Esophagus squamous epithelium (tissue), 5 donors: ENCODE measurements at regions of chr13 and their contacts with region 1.

Region 1: DNA sequence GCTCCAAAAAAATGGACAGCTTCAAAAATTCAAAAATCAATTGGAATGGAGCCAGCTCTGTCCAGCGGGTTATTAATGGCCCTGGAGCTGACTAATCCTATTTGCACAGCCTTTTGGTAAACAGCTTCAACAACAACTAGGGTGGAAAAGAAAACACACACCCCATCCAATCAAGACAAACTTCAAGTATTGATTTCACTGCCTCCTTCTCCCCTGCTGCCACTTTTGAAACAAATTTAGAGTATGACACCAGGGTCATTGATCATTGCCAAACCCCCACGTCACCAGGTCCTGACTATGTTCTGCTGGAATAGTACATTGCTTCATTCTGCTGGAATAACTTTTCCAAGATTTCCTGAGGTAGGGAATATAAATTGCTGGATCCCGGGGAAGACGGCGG is 56.8 kb upstream of the GTF3A start:
- DNase-seq: no peak
- H3K4me3 ChIP-seq: no peak overlapping the region
- H3K27ac ChIP-seq: no peak overlapping the region
- H3K4me1 ChIP-seq: peaks cover 0 to 2% (median 1%) of the 10 kb centered on the region in 3 donors
- H3K27me3 ChIP-seq: peaks cover 0 to 77% (median 0%) of the 10 kb centered on the region in 4 donors
- CTCF ChIP-seq: no peak
- POLR2A ChIP-seq: no peak

Region 2: DNA sequence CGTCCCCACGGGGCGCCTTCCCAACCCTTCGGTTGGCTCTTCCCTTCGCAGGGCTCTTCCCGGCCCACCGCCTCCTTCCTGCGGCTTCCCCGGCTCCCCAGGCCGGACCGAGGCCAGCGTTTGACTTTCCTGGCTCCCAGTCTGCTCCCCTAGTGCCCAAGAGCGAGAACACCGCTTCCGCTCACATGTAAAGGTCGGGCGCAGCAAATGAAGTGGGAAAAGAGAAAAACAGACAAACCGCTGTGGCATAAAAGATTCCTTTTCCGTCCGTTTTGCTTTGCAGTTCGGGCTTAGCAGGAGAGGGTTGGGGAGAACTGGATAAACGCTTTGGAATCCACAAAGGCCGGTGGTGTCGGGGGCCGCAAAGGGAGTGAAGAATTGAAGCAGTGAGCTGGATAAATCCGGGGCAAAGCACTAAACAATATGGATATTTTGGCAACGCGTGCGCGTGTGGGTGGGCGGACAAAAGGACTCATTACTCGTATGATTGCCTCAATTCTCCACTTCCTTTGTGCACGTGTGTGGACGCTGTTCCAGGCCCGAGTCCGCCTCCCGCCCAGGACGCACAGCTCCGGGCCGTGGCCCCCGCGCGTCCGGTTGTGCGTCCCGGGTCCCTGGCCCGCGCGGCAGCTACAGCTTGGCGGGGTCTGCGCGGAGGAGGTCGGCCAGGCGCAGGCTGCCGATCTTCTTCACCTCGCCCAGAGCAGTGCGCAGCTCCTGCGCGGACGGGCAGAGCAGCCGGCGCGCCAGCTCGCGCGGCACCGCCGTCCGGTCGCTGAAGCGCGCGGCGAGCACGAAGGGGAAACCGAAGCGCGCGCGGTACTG is 610.1 kb after region 1 on chr13:
- intact Hi-C with region 1: loop called (anchors 5 kb)
- DNase-seq: no peak
- H3K4me3 ChIP-seq: peak overlapping the region in 1 of 4 donors; percentile 19
- H3K27ac ChIP-seq: no peak overlapping the region
- H3K4me1 ChIP-seq: peaks cover 11 to 44% (median 16%) of the 10 kb centered on the region in 3 donors
- H3K27me3 ChIP-seq: peaks cover 8 to 100% (median 36%) of the 10 kb centered on the region in 4 donors
- CTCF ChIP-seq: no peak
- POLR2A ChIP-seq: no peak